ENCODE measurements at regions of chr9 and their contacts with region 1.

Region 1: DNA sequence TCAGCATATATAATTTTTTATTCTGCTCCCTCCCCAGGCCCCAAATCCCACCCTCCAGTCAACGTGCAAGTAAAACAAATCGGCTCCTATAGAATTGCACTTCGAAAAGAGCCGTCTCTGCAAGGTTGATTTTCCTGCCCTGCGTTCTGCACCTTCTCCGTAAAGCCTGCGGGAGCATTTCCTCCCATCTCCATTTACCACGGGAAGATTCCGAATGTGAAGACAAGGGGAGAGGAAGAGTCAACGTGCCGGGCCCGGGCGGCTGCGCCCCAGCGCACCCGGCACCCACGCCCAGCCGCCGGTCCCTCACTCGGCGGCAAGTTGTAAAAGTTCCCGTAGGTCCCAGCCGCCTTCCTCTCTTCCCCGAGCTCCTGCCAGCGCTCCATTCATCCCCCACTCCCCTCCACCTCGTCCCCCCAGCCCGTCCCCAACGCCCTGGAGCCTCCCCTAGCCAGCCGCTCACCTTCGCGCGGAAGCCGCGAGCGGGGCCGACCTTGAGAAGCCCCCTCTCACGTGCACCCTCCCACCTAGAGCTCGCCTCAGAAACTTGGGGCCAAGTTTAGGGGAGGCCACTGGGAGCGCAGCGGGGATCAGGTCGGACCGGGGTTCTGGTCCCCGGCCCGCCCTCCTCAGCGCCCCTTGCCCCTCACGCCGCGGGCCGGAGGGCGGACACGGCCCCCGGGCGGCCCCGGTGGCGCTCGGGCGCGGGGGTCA is 431 bp downstream of the BNC2 start:
- DNase-seq: peak; percentile 25
- H3K4me3 ChIP-seq: peak overlapping the region; percentile 75 to 88
- H3K27ac ChIP-seq: peak overlapping the region; percentile 95 to 99
- H3K4me1 ChIP-seq: no peaks in the 10 kb centered on the region
- H3K27me3 ChIP-seq: no peaks in the 10 kb centered on the region
- CTCF ChIP-seq: no peak
- POLR2A ChIP-seq: no peak

Region 2: DNA sequence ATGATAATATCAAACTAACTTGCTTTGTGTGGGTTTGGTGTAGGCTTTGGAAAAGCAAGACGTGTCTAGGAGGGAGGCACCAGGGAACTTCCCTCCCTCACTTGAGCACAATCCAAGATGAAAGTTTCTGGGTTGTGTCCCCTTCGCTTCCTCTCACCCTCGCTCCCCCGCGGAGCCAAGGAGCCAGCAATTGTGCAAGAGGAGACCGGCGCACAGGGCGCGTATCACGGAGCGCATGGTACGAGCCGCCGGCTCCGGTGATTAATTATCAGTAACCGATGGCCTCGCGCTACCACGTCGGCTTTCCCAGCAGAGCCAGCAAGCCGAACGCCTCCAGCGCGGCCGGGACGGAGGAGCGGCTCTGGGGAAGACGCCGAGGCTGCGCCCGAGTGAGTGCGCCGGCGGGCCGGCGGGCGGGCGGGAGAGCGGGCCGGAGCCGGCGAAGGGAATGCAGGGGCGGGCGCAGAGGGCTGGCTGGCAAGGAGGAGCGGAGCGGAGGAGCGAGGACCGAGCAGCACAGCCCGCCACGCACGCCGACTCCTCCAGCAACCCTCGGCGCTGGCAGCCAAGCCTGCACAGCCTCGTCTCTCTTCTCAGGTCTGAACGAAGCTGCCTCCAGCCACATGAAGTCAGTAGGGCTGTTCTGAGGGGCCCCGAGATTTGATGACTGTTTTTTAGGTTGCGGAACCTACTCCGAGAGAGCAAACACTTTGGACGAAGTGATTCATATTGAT is 143.2 kb before region 1 on chr9:
- intact Hi-C with region 1: loop called (anchors 10 kb)
- DNase-seq: peak; percentile 84
- H3K4me3 ChIP-seq: peak overlapping the region; percentile 53 to 72
- H3K27ac ChIP-seq: peak overlapping the region; percentile 84
- H3K4me1 ChIP-seq: peaks cover 11% of the 10 kb centered on the region
- H3K27me3 ChIP-seq: no peaks in the 10 kb centered on the region
- CTCF ChIP-seq: no peak
- POLR2A ChIP-seq: no peak

Region 3: GRCh38 chr9:17852108-17852507 is 982.1 kb after region 1 on chr9:
- intact Hi-C with region 1: no loop called
- DNase-seq: no peak
- H3K4me3 ChIP-seq: no peak overlapping the region
- H3K27ac ChIP-seq: no peak overlapping the region
- H3K4me1 ChIP-seq: no peaks in the 10 kb centered on the region
- H3K27me3 ChIP-seq: no peaks in the 10 kb centered on the region
- CTCF ChIP-seq: no peak
- POLR2A ChIP-seq: no peak